Activated T-helper 1 cell treated with anti-CD3 and anti-CD28 coated beads, Interleukin-12 subunit alpha, Interleukin-12 subunit beta, Interleukin-2, Interleukin-4 antibody, amounts not matched to agents 30 ng/mL and 10 ng/mL and 1 ng/mL, durations not matched to agents 14 hours and 24 hours and 36 hours (primary cell): ENCODE measurements at regions of chr2 and their contacts with region 1.

Region 1: DNA sequence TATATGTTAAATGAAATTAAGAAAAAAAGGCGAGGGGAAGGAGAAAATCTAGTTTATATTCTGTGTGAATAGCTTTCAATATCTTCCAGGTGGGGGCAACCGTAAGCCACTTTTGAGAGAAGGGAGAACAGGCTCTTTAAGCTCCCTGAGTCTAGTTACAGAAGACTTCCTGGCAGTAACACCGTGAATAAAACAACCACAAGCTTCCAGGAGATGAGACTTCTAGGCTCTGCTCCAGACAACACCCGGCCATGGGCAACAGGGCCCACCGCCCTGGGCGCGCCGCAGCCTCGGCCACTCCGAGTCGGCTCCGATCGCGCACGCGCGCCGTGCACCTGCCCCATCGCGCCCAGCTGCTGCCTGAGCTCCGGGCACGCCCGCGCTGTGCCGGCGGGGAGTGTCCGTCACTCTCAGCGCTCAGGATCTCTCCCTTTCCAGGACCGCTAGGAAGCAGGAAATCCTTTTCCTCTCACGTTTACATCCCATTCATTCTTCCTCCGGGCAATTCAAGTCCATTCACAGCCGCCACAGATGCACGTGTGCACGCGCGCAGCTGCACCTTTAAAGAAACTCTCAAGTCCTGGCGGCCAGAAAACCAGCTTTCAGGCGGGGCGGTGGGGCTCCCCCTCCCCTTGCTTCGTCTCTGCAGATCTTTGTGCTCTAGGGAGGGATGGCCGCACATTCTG is 19.4 kb upstream of the PAX3 start:
- DNase-seq: peak; percentile 43
- H3K4me3 Mint-ChIP-seq: peak overlapping the region; percentile 86
- H3K27ac Mint-ChIP-seq: no peak overlapping the region
- H3K4me1 Mint-ChIP-seq: peaks cover 17% of the 10 kb centered on the region
- H3K27me3 Mint-ChIP-seq: peaks cover 57% of the 10 kb centered on the region

Region 2: GRCh38 chr2:222257645-222258044 is 60.5 kb before region 1 on chr2:
- intact Hi-C with region 1: no loop called
- DNase-seq: no peak
- H3K4me3 Mint-ChIP-seq: no peak overlapping the region
- H3K27ac Mint-ChIP-seq: no peak overlapping the region
- H3K4me1 Mint-ChIP-seq: no peaks in the 10 kb centered on the region
- H3K27me3 Mint-ChIP-seq: peaks cover 9% of the 10 kb centered on the region

Region 3: GRCh38 chr2:222283634-222284033 is 34.5 kb before region 1 on chr2:
- intact Hi-C with region 1: loop called (anchors 5 kb)
- DNase-seq: no peak
- H3K4me3 Mint-ChIP-seq: no peak overlapping the region
- H3K27ac Mint-ChIP-seq: no peak overlapping the region
- H3K4me1 Mint-ChIP-seq: no peaks in the 10 kb centered on the region
- H3K27me3 Mint-ChIP-seq: peaks cover 32% of the 10 kb centered on the region

Region 4: DNA sequence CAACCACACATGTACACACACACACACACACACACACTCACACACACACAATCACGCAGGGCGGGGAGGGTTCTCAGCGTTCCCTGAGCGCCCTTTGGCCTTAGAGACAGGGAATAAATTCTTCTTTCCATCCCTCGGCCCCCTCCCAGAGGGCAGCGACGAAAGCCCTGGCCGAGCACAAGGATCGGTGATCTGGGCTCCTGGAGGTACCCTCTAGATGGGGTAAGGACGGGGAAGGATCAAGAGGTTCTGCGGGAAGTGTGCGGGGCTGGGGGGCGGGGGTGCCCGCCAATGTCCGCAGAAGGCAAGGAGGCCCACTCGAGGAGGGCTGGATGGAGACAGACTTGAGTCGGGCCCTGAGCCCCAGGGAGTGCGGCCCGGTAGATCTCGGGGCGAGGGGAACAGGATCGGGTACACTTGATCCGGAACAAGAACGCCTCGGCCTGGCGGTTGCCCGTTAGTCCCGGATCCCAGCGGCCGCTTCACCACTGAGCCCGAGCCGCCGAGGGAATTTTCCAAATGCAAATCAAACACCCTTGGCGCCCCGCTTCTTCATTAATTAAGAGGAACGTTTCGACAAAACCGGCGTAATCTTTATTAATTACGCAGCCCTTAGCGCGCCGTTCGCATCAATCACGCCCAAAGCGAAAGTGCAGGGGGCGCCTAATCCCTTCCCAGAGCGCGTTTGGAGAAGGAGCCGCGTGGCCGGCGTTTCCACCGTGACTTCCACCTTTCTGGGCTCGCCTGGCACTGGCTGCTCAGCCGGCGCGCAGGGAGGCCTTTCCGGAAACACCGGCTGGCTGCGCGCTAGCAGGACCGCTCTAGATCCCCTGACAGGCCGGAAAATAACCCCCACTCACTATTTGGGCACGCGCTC is 12.4 kb before region 1 on chr2:
- intact Hi-C with region 1: loop called (anchors 1 kb)
- DNase-seq: no peak
- H3K4me3 Mint-ChIP-seq: peak overlapping the region; percentile 72
- H3K27ac Mint-ChIP-seq: peak overlapping the region; percentile 49
- H3K4me1 Mint-ChIP-seq: peaks cover 16% of the 10 kb centered on the region
- H3K27me3 Mint-ChIP-seq: peaks cover 93% of the 10 kb centered on the region

Region 5: GRCh38 chr2:222561817-222562645 is 243.9 kb after region 1 on chr2:
- intact Hi-C with region 1: loop called (anchors 1 kb)
- DNase-seq: peak; percentile 9
- H3K4me3 Mint-ChIP-seq: no peak overlapping the region
- H3K27ac Mint-ChIP-seq: no peak overlapping the region
- H3K4me1 Mint-ChIP-seq: no peaks in the 10 kb centered on the region
- H3K27me3 Mint-ChIP-seq: no peaks in the 10 kb centered on the region

Region 6: DNA sequence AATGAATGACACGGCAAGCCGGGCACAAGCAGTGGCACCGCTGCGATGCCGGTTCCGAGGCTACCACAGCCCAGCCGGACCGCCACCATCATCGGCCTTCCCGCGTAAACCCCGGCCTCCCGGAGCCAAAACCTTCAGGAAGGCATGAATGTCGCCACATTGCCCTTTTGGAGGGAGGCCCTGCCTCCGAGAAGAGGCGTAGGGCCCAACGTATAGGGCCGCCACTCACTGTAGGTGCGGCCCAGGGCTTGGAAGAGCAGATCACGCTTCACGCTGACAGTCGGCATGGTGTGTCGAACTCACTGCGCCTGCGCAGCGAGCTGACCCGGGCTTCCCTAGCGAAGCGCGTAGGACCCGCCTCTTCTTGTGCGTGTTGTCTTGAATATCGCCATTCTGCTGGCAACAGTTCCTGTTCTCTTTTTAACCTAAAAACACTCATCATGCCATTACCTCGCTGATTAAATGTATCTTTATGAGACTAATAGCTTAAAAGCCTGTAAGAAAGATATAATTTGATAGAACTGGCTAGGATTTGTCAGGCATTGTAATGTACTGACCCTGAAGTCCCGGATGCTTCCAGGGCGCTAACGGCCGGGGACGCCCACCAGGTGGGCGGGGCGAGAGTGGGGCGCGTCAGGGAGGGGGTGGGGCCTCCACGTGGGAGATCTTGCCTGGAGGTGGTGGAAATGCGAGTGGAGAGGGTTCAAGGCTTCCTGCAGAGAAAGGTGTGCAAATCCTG is 337.8 kb after region 1 on chr2 and contains the start of gene FARSB:
- intact Hi-C with region 1: loop called (anchors 1 kb)
- DNase-seq: peak; percentile 90
- H3K4me3 Mint-ChIP-seq: peak within 1 kb of the TSS; percentile 95
- H3K27ac Mint-ChIP-seq: peak within 1 kb of the TSS; percentile 87
- H3K4me1 Mint-ChIP-seq: peaks cover 36% of the 10 kb centered on the region
- H3K27me3 Mint-ChIP-seq: no peaks in the 10 kb centered on the region
- total RNA-seq, gene FARSB: 48.9 and 53.4 TPM in 2 replicates